Head of caudate nucleus (tissue), 42 donors: ENCODE measurements at regions of chr19 and their contacts with region 1.

Region 1: DNA sequence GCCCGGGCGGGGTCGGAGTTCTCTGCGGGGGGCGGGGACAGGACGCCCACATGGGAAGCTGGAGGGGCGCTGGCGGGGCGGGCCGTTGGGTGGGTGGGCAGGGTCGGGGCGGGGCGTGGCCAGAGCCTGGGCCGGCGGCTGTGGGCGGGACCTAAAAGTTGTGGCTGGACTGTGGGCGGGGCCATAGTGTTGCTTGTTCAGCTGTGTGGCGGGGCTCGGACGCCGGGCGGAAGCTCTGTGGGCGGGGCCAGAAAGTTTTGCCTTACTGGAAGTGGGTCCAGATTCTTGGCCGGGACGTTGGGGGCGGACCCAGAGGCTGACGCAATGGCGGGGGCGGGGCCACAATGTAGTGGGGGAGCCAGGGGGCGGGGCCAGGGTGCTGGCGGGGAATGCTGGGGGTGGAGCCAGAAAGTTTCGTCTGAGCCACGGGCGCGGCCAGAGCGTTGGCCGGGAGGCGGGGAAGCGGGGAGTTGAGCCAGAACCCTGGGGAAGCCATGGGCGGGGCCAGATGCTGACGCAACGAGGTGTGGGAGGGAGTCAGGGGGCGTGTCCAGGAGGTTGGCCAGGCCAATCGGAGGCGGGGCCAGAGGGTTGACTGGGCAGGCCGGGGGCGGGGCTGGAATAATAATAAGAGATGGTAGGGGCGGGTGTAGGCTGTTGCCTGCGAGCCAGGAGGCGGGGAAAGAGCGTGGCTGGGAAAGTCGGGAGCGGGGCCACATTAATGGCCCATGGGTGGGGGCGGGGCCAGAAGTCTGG is 541 bp downstream of the CCDC9 start:
- DNase-seq: peak; percentile 98 to 100 (median 99)

Region 2: GRCh38 chr19:47243776-47244547 is 12.9 kb before region 1 on chr19:
- intact Hi-C with region 1: no loop called
- DNase-seq: peak; percentile 53 to 93 (median 84)

Region 3: DNA sequence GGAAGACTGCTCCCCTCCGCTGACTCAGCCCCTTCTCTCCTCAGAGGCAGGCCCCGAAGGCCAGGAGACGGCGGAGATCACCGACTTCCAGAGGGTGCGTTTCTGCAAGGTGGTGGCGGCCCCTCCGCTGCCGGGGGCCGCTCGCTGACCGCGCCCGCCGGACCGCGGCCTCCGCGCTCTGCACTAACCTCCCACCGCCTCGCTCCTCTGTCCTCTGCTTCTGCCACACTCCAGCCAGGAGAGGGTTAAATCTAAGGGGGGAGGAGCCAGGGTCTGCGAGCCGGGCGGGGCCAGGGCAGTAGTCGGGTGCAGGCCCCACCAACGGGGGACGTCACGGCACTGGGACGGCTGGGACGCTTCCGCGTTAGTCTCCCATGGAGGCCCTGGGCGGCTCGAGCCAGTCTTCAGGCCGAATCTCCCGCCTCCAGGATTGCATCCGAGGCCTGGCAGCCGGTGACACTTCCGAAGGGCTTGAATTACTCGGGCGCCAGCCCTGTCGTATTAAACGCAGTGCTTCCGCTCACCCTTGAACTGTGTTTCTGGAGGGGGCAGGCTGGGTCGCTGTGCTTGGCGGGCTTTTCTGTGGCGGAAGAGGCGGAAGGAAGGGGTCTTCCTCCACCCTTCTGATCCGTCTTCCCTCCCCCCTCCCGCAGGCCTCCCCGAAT is 16.6 kb after region 1 on chr19:
- intact Hi-C with region 1: loop called (anchors 1 kb)
- DNase-seq: peak; percentile 81 to 96 (median 92)